ENCODE measurements at regions of chr13 and their contacts with region 1.

Region 1: GRCh38 chr13:40102856-40103255 is 447.4 kb downstream of the COG6 start:
- DNase-seq: peak; percentile 98
- ATAC-seq: peak; percentile 86
- H3K4me3 Mint-ChIP-seq: peak overlapping the region; percentile 62
- H3K27ac Mint-ChIP-seq: peak overlapping the region; percentile 99
- H3K4me1 Mint-ChIP-seq: peaks cover 53% of the 10 kb centered on the region
- H3K27me3 Mint-ChIP-seq: no peaks in the 10 kb centered on the region

Region 2: GRCh38 chr13:40069173-40070044 is 33.4 kb before region 1 on chr13:
- CTCF ChIA-PET with region 1: interaction called, 8 read pairs
- POLR2A ChIA-PET with region 1: no interaction called
- intact Hi-C with region 1: loop called (anchors 1 to 5 kb)
- DNase-seq: peak; percentile 86
- ATAC-seq: peak; percentile 93
- H3K4me3 Mint-ChIP-seq: peak overlapping the region; percentile 26
- H3K27ac Mint-ChIP-seq: peak overlapping the region; percentile 80
- H3K4me1 Mint-ChIP-seq: peaks cover 31% of the 10 kb centered on the region
- H3K27me3 Mint-ChIP-seq: no peaks in the 10 kb centered on the region

Region 3: GRCh38 chr13:40155201-40155600 is 52.3 kb after region 1 on chr13:
- CTCF ChIA-PET with region 1: no interaction called
- POLR2A ChIA-PET with region 1: no interaction called
- intact Hi-C with region 1: no loop called
- DNase-seq: no peak
- ATAC-seq: no peak
- H3K4me3 Mint-ChIP-seq: no peak overlapping the region
- H3K27ac Mint-ChIP-seq: no peak overlapping the region
- H3K4me1 Mint-ChIP-seq: peaks cover 33% of the 10 kb centered on the region
- H3K27me3 Mint-ChIP-seq: no peaks in the 10 kb centered on the region

Region 4: DNA sequence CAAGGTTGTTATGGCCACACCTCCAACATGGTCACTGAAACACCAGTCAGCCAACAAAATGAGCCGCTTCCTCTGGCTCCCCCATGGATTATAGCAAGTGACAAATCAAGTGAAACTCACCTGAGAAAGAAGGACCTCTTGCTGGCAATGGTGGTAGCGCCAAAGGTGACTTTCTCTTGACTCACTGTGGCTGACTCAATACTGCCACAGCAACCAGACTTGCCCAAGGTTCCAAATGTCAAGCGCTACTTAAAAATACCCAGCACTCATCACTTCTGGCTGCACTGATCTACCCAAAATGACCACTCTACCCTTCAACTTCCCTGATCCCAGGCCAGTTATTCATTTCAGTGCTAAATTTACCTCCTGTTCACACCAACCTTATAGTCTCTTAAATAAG is 68.1 kb after region 1 on chr13:
- CTCF ChIA-PET with region 1: interaction called, 3 read pairs
- POLR2A ChIA-PET with region 1: no interaction called
- intact Hi-C with region 1: loop called in 1 of 2 experiments (anchors 1 kb)
- DNase-seq: peak; percentile 80
- ATAC-seq: peak; percentile 91
- H3K4me3 Mint-ChIP-seq: no peak overlapping the region
- H3K27ac Mint-ChIP-seq: peak overlapping the region; percentile 38
- H3K4me1 Mint-ChIP-seq: peaks cover 40% of the 10 kb centered on the region
- H3K27me3 Mint-ChIP-seq: no peaks in the 10 kb centered on the region

Region 5: DNA sequence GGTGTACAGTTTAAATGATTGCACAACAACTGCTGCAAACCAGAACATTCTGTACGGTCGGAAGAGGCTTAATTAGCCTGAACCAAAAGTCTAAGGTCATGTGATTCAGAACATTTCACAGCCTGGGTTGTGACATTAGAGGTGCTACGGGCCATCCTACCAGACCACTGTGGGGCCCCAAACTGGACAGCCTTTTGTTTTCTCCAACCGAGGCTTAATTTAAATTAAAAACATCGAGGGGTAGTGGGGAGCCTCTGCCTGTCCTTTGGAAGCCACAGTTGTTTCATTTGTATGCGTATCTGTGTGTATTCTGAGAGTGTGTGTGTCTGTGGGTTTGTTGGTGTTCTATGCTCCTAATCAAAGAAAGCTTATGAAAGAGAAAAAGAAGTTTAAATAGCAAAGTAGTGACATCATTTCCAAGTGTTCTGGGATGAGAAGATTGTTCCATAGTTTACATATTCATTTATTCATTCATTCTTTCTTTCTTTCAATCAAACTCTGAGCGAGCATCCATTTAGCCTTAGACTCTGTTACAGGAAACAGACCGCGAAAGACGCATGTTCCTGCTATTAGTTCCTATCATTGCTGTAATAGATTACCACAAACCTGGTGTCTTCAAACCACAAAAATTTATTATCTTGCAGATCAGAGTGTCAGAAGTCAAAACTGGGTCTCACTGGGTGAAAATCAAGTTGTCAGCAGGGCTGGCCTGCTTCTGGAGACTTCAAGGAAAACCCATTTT is 118.8 kb after region 1 on chr13:
- CTCF ChIA-PET with region 1: no interaction called
- POLR2A ChIA-PET with region 1: interaction called, 4 read pairs
- intact Hi-C with region 1: loop called (anchors 1 to 2 kb)
- DNase-seq: peak; percentile 62
- ATAC-seq: peak; percentile 63
- H3K4me3 Mint-ChIP-seq: peak overlapping the region; percentile 45
- H3K27ac Mint-ChIP-seq: peak overlapping the region; percentile 91
- H3K4me1 Mint-ChIP-seq: peaks cover 61% of the 10 kb centered on the region
- H3K27me3 Mint-ChIP-seq: no peaks in the 10 kb centered on the region

Region 6: GRCh38 chr13:40485611-40486517 is 383.0 kb after region 1 on chr13:
- CTCF ChIA-PET with region 1: no interaction called
- POLR2A ChIA-PET with region 1: no interaction called
- intact Hi-C with region 1: loop called in 1 of 2 experiments (anchors 5 kb)
- DNase-seq: peak; percentile 80
- ATAC-seq: peak; percentile 94
- H3K4me3 Mint-ChIP-seq: peak overlapping the region; percentile 20
- H3K27ac Mint-ChIP-seq: peak overlapping the region; percentile 93
- H3K4me1 Mint-ChIP-seq: peaks cover 86% of the 10 kb centered on the region
- H3K27me3 Mint-ChIP-seq: no peaks in the 10 kb centered on the region

Region 7: DNA sequence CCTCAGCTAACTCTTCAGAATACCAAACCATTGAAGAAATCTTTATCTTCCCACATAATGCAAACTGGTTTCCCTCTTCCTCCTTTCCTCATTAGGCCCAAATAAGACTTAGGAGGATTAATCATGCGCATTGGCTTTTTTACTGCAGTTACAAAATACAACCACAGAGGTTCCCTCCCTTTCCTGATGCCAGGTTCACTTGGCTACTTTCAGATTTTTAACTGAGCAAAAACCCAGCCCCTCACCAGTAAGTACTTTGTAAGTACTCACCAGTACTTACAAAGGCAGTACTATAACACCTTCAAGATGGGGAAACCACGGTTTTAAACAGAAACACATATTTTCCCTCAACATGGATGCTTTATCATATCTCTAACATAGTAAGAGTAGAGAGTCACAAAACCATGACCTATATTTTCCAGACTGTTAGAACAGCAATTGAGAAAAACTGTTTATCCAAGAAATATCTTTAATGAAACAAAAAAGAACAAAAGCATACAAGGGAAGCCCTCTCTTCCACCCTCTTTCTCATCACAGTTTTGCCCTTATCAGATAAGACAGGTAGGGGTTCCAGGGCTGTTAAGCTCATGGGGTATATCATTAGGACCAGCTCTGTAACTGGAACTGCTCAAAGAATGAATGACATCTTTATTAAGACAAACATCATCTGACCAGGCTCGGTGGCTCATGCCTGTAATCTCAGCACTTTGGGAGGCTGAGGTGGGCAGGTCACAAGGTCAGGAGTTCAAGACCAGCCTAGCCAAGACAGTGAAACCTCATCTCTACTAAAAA is 550.9 kb after region 1 on chr13:
- CTCF ChIA-PET with region 1: no interaction called
- POLR2A ChIA-PET with region 1: no interaction called
- intact Hi-C with region 1: loop called in 1 of 2 experiments (anchors 2 kb)
- DNase-seq: peak; percentile 38
- ATAC-seq: peak; percentile 86
- H3K4me3 Mint-ChIP-seq: peak overlapping the region; percentile 38
- H3K27ac Mint-ChIP-seq: peak overlapping the region; percentile 87
- H3K4me1 Mint-ChIP-seq: peaks cover 95% of the 10 kb centered on the region
- H3K27me3 Mint-ChIP-seq: no peaks in the 10 kb centered on the region

Region 8: DNA sequence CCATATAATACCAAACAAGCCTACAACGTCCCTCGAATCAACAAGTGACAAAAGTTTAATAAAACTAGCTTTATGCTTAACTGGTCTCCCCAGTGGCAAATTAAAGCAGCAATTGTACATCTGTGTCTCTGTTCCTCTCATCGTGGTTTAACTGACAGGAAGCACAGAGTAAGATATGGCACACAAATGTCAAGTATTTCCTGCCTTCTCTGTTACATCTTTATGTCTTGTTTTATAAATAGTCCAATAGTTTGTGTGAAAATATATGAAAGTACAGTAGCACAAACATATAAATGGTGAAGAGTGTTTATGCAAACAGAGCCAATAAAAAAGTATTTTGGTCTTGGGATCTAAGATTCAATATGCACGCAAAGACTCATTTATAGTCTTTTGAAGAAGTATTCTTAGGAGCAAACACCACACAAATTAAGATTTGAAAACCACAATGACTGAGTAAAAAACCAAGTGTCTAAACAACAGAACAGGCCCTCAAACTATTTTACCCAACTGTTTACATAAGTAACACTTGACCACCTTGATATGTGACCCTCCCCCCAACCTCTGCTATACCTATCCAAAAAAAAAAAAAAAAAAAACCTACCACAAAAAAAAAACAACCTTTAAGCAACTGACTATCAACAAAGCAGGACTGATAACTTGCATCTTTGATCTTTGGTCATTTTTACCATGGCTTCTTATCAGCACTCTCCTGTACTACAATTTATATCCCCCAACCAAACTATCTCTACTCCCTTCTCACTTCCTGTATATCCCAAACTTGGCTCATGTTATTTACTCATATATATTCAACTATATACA is 902.2 kb after region 1 on chr13:
- CTCF ChIA-PET with region 1: no interaction called
- POLR2A ChIA-PET with region 1: no interaction called
- intact Hi-C with region 1: loop called in 1 of 2 experiments (anchors 1 kb)
- DNase-seq: no peak
- ATAC-seq: peak; percentile 76
- H3K4me3 Mint-ChIP-seq: peak overlapping the region; percentile 29
- H3K27ac Mint-ChIP-seq: peak overlapping the region; percentile 93
- H3K4me1 Mint-ChIP-seq: peaks cover 63% of the 10 kb centered on the region
- H3K27me3 Mint-ChIP-seq: no peaks in the 10 kb centered on the region

Measured in activated CD4-positive, alpha-beta T cell treated with anti-CD3 and anti-CD28 coated beads for 36 hours (primary cell).